Pancreas (tissue), 10 donors: ENCODE measurements at regions of chr1 and their contacts with region 1.

Region 1: GRCh38 chr1:230917284-230918135 is 49.2 kb upstream of the C1orf198 start:
- DNase-seq: peak; percentile 71 to 85 (median 79)
- ATAC-seq: peak; percentile 91 to 98 (median 96)
- H3K4me3 ChIP-seq: no peak overlapping the region
- H3K27ac ChIP-seq: no peak overlapping the region
- H3K4me1 ChIP-seq: no peaks in the 10 kb centered on the region
- H3K27me3 ChIP-seq: no peaks in the 10 kb centered on the region
- CTCF ChIP-seq: peak; percentile 71 to 82 (median 78)

Region 2: GRCh38 chr1:230365723-230366307 is 551.7 kb before region 1 on chr1:
- intact Hi-C with region 1: no loop called
- DNase-seq: no peak
- ATAC-seq: peak; percentile 23 to 43 (median 27)
- H3K4me3 ChIP-seq: no peak overlapping the region
- H3K27ac ChIP-seq: no peak overlapping the region
- H3K4me1 ChIP-seq: no peaks in the 10 kb centered on the region
- H3K27me3 ChIP-seq: no peaks in the 10 kb centered on the region
- CTCF ChIP-seq: no peak

Region 3: DNA sequence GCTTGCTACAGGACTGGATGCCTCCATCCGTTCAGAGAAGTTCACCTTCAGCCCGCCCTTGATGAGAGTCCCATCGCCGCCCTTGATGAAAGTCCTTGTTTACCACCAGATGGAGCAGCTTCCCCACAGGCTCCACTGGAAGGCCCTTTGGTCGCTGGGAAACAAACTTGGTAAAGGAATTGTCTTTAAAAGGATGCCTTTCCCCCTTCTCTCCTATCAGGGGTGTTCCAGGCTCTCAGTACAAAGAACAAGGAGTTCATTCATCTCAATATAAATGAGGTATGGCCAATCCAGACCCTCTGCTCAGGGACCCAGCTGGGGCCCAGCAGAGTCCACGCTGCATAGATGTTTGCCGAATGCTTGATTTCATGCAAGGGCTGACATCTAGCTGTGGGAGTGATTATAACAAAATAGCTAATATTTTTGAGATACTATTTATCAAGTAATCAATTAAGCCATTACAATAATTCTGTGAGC is 119.5 kb before region 1 on chr1:
- intact Hi-C with region 1: loop called in 1 of 3 experiments (anchors 5 kb)
- DNase-seq: peak; percentile 39 to 66 (median 54)
- ATAC-seq: peak; percentile 92 to 98 (median 95)
- H3K4me3 ChIP-seq: no peak overlapping the region
- H3K27ac ChIP-seq: no peak overlapping the region
- H3K4me1 ChIP-seq: no peaks in the 10 kb centered on the region
- H3K27me3 ChIP-seq: no peaks in the 10 kb centered on the region
- CTCF ChIP-seq: peak; percentile 49 to 56 (median 53)

Region 4: DNA sequence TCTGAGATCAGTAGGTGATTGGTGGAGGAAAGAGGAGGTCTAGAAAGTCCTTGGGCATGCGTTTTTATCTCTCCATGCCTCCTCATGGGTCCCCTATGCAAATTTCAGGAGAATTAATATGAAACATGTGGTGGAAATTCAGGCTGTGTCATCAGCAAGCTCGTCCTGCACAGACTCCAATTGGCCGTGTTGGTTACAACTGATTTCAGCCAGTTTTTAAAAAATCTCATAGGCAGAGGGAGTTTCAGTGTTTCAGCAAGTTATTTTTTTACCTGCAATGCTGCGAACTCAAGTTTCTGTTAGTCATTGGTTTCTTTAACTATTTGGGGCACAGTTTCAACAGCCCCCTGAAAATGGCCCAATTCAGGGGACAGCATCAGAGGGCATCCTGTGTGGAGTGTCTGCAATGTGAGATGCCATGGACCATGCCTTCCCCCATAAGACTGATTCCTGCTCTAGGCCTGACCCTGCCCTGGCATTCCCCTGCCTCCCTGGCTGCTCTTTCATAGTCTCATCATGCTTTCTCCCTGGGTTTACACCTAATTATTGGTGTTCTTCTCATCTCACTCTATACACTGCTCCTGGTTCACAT is 109.1 kb before region 1 on chr1:
- intact Hi-C with region 1: no loop called
- DNase-seq: no peak
- ATAC-seq: no peak
- H3K4me3 ChIP-seq: no peak overlapping the region
- H3K27ac ChIP-seq: peak overlapping the region in 1 of 4 donors; percentile 29
- H3K4me1 ChIP-seq: peaks cover 0 to 6% (median 0%) of the 10 kb centered on the region in 3 donors
- H3K27me3 ChIP-seq: no peaks in the 10 kb centered on the region
- CTCF ChIP-seq: no peak

Region 5: DNA sequence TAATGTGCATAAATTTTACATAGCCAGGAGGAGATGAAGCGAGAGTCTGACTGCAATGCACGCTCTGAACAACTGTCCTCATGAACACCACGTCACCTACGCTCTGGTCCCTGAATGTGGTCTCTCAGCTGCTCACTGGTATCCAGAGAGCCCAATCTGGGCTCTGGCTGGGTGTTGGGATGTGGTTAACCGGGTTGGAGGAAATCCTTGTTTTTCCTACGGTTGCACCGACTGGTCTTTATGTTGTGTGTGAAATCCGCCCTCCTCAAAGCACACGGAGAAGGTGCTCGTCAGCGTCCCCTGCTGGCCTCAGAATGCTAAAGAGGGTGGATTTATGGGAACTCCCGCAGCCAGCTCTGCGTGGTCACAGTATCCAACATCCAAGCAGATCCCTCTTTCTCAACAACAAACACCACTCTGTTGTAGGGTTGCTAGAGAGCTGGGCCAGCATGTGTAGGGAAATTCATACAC is 174.4 kb after region 1 on chr1:
- intact Hi-C with region 1: loop called in 1 of 3 experiments (anchors 10 kb)
- DNase-seq: peak in 5 of 6 donors; percentile 13 to 80 (median 54)
- ATAC-seq: peak; percentile 71 to 93 (median 82)
- H3K4me3 ChIP-seq: no peak overlapping the region
- H3K27ac ChIP-seq: no peak overlapping the region
- H3K4me1 ChIP-seq: no peaks in the 10 kb centered on the region
- H3K27me3 ChIP-seq: no peaks in the 10 kb centered on the region
- CTCF ChIP-seq: peak; percentile 24 to 55 (median 40)

Region 6: GRCh38 chr1:231200388-231201031 is 283.0 kb after region 1 on chr1:
- intact Hi-C with region 1: loop called in 1 of 3 experiments (anchors 10 kb)
- DNase-seq: no peak
- ATAC-seq: peak in 1 of 4 donors; percentile 27
- H3K4me3 ChIP-seq: no peak overlapping the region
- H3K27ac ChIP-seq: no peak overlapping the region
- H3K4me1 ChIP-seq: no peaks in the 10 kb centered on the region
- H3K27me3 ChIP-seq: no peaks in the 10 kb centered on the region
- CTCF ChIP-seq: no peak

Region 7: DNA sequence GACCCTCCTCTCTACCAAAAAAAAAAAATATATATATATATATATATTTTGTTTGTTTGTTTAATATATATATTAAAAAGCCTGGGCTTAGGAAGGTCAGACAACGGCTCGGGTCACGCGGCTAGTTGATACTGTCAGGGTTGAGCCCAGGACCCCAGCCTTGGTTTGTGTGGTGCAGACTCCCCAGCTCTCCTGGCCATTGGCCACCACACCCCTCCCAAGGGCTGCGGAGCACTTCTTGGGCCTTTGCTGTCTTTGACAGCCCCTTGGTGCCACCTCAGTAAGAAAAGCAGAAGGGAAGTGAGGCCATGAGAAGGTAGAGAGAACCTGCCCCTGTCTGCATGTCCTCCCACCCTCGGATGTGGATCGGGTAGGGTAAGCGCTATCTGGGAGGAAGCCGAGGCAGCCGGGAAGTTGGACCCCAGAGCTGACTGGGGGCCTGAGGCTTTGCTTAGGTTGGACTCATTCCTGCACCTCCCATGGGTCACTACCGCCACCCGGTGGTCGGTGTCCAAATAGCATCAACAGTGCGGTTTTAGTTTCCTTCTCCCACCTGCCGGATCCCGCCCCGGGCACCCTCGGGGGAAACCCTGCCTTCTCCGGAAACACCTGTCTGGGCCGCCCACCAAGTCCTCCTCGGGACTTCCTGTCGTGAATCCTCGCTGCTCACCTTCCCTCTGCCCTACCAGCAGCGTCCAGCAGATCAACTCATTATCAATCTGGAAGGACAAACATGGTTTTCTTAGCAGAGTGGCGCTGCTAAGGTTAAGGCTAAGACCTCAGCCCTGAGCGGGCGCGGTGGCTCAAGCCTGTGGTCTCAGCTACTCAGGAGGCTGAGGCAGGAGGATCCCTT is 293.7 kb after region 1 on chr1:
- intact Hi-C with region 1: loop called (anchors 5 to 10 kb)
- DNase-seq: peak; percentile 76 to 97 (median 89)
- ATAC-seq: peak; percentile 88 to 99 (median 98)
- H3K4me3 ChIP-seq: peak overlapping the region in 3 of 4 donors; percentile 23 to 57 (median 40)
- H3K27ac ChIP-seq: peak overlapping the region in 2 of 4 donors; percentile 22 to 41
- H3K4me1 ChIP-seq: no peaks in the 10 kb centered on the region
- H3K27me3 ChIP-seq: no peaks in the 10 kb centered on the region
- CTCF ChIP-seq: peak; percentile 63 to 92 (median 84)